ENCODE measurements at regions of chr19 and their contacts with region 1.

Region 1: GRCh38 chr19:42529248-42529764 is 1.0 kb upstream of the CEACAM1 start:
- DNase-seq: peak; percentile 84
- CTCF ChIP-seq: peak; percentile 97

Region 2: GRCh38 chr19:42440357-42441048 is 88.8 kb before region 1 on chr19:
- CTCF ChIA-PET with region 1: interaction called, 58 read pairs
- POLR2A ChIA-PET with region 1: no interaction called
- DNase-seq: peak; percentile 75
- CTCF ChIP-seq: peak; percentile 88

Region 3: DNA sequence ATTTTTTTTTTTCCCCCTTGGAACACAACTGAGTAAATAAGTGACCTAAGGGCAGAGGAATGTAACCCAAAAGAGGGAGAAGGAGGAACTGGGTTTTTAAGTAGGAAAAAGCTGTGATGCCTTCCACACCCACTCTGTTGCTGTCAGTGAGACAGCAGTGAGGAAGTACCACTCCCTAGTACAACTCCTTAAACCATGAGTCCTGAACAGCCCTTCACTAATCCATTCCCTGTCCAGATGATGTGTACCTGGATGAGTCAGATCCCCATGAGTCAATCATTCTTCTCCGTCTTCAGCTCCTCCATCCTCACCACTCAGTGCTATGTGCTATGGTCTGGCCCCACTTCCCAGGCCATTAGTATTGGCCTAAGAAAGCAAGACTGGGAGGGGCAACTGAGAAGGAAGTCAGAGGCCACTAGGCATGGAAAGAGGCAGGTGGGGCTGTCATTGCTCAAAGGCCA is 73.7 kb before region 1 on chr19:
- CTCF ChIA-PET with region 1: interaction called, 194 read pairs
- POLR2A ChIA-PET with region 1: no interaction called
- DNase-seq: no peak
- CTCF ChIP-seq: no peak

Region 4: GRCh38 chr19:42468273-42468796 is 61.0 kb before region 1 on chr19:
- CTCF ChIA-PET with region 1: interaction called, 97 read pairs
- POLR2A ChIA-PET with region 1: no interaction called
- DNase-seq: no peak
- CTCF ChIP-seq: no peak

Region 5: GRCh38 chr19:42505066-42505465 is 24.2 kb before region 1 on chr19:
- CTCF ChIA-PET with region 1: interaction called, 13 read pairs
- POLR2A ChIA-PET with region 1: no interaction called
- DNase-seq: no peak
- CTCF ChIP-seq: no peak

Region 6: DNA sequence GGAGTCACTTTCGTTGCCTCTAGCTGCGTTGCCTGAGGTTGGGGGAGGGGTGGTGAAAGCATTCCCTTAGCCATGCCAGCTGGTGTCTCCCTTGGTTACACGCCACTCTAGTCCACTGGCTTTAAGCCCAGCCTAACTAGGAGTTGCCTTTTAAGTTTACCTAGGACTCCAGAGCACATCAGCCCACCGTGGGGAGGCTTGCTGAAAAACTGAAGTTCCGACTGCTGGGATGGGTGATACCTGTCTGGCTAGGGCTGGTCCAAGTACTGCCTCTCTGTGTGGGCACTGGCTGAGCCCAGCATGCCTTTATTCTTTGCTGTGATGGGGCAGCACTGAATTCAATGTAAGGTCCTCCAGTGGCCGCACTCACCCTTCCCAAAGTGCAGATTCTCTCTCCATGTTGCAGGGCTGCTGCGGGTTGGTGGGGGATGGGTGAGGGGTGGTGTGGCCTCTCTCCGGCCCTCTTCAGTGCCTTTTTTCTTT is 10.8 kb after region 1 on chr19:
- CTCF ChIA-PET with region 1: interaction called, 14 read pairs
- POLR2A ChIA-PET with region 1: no interaction called
- DNase-seq: no peak
- CTCF ChIP-seq: no peak

Region 7: DNA sequence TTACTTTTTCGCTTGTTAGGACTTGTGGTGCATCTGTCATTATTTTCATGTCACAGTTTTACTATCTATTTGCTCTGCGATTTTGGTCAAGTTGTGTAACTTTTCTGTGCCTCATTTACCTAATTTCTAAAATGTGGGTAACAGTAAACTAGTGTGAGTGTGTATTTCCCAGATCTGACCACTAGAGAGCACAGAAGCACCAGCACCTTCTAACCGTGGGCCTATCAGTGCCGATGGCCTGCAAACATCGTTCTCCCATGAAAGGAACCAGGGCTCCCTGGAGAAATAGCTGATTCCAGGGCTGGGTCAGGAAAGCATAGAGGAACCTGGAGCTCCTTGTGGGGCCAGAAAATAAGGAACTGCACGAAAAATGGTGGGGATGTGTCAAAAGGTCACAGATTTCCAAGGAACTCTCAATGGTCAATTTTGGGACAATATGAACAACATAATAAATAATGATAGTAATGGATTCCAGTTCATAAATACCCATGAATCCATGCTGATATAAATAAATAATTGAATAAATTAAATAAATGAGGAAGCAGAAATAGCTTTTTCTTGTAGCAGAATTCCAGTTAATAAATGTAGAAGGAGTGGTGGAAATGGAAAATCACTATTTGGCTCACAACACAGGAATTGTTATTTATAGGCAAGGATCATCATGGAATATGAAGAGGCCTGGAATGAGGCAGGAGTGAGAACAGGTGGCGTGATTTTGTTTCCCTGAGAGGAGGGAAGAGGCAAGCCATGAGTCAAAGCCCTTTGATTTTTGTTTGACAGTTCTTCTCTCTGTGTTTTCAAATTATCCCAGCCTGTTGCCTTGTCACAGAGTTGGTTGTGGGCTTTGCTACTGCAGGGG is 34.3 kb after region 1 on chr19:
- CTCF ChIA-PET with region 1: interaction called, 14 read pairs
- POLR2A ChIA-PET with region 1: no interaction called
- DNase-seq: peak; percentile 68
- CTCF ChIP-seq: peak; percentile 67

Region 8: DNA sequence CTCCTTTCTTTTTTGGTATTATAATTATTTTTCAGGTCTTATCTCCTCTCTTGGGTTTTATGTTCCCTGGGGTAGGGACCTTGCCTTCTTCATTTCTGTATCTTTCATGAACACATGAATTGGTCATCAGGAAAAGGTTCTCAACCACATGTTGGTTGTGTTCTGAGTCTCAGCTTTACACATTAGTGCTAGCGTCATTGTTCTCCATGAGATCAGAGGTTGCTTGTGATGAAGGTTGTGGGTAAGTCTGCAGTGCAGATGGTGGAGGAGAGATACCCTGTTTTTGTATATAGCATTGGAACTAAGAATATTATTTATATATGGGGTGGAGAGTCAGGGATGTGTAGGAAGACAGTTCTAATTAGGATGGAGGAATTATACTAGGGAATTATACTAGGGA is 90.0 kb after region 1 on chr19:
- CTCF ChIA-PET with region 1: no interaction called
- POLR2A ChIA-PET with region 1: no interaction called
- DNase-seq: no peak
- CTCF ChIP-seq: no peak

Measured in GM10248 (cell line).